ENCODE measurements at regions of chr19 and their contacts with region 1.

Region 1: GRCh38 chr19:52048555-52049501 is at the start of gene ZNF432:
- DNase-seq: peak; percentile 83 to 91
- H3K4me3 ChIP-seq: peak within 1 kb of the TSS; percentile 77
- H3K27ac ChIP-seq: peak within 1 kb of the TSS; percentile 54
- H3K4me1 ChIP-seq: peaks cover 5% of the 10 kb centered on the region
- H3K27me3 ChIP-seq: no peaks in the 10 kb centered on the region
- CTCF ChIP-seq: no peak
- total RNA-seq, gene ZNF432: 8.1 and 9.9 TPM in 2 replicates

Region 2: GRCh38 chr19:51354742-51355148 is 694.1 kb before region 1 on chr19:
- CTCF ChIA-PET with region 1: no interaction called
- POLR2A ChIA-PET with region 1: interaction called, 15 read pairs
- intact Hi-C with region 1: no loop called
- DNase-seq: no peak
- H3K4me3 ChIP-seq: no peak overlapping the region
- H3K27ac ChIP-seq: no peak overlapping the region
- H3K4me1 ChIP-seq: peaks cover 8% of the 10 kb centered on the region
- H3K27me3 ChIP-seq: no peaks in the 10 kb centered on the region
- CTCF ChIP-seq: no peak

Region 3: GRCh38 chr19:52028027-52028779 is 20.6 kb before region 1 on chr19 and contains the start of gene ZNF614:
- CTCF ChIA-PET with region 1: no interaction called
- POLR2A ChIA-PET with region 1: no interaction called
- intact Hi-C with region 1: loop called (anchors 1 kb)
- DNase-seq: peak; percentile 75 to 85
- H3K4me3 ChIP-seq: peak within 1 kb of the TSS; percentile 79
- H3K27ac ChIP-seq: peak within 1 kb of the TSS; percentile 69
- H3K4me1 ChIP-seq: peaks cover 7% of the 10 kb centered on the region; the same call in 1 of the 2 replicates
- H3K27me3 ChIP-seq: no peaks in the 10 kb centered on the region
- CTCF ChIP-seq: no peak
- total RNA-seq, gene ZNF614: 8.6 and 9.9 TPM in 2 replicates

Region 4: DNA sequence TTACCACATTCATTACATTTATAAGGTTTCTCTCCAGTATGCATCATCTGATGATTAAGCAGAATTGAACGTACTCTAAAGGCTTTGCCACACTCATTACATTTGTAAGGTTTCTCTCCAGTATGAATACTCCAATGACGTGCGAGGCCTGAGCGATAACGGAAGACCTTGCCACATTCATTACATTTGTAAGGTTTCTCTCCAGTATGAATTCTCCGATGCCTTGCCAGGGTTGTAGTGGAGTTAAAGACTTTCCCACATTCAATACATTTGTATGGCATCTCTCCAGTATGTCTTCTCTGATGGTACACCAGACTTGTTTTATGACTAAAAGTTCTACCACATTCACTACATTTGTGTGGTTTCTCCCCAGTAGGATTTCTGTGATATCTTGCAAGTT is 16.6 kb after region 1 on chr19:
- CTCF ChIA-PET with region 1: interaction called, 17 read pairs
- POLR2A ChIA-PET with region 1: no interaction called
- intact Hi-C with region 1: no loop called
- DNase-seq: no peak
- H3K4me3 ChIP-seq: 0 out of 2 replicates have a peak overlapping the region, but pooled peaks have one; percentile 17
- H3K27ac ChIP-seq: no peak overlapping the region
- H3K4me1 ChIP-seq: no peaks in the 10 kb centered on the region
- H3K27me3 ChIP-seq: no peaks in the 10 kb centered on the region
- CTCF ChIP-seq: no peak

Region 5: GRCh38 chr19:52139252-52140031 is 90.6 kb after region 1 on chr19 and contains the start of gene ZNF616:
- CTCF ChIA-PET with region 1: no interaction called
- POLR2A ChIA-PET with region 1: no interaction called
- intact Hi-C with region 1: loop called (anchors 2 kb)
- DNase-seq: peak; percentile 82 to 88
- H3K4me3 ChIP-seq: peak within 1 kb of the TSS; percentile 74
- H3K27ac ChIP-seq: peak within 1 kb of the TSS; percentile 76
- H3K4me1 ChIP-seq: peaks cover 24% of the 10 kb centered on the region
- H3K27me3 ChIP-seq: no peaks in the 10 kb centered on the region
- CTCF ChIP-seq: peak; percentile 93
- total RNA-seq, gene ZNF616: 9.9 and 12.6 TPM in 2 replicates

Measured in PC-9 (cell line).